Right lobe of liver (tissue), 6 donors: ENCODE measurements at regions of chr18 and their contacts with region 1.

Region 1: DNA sequence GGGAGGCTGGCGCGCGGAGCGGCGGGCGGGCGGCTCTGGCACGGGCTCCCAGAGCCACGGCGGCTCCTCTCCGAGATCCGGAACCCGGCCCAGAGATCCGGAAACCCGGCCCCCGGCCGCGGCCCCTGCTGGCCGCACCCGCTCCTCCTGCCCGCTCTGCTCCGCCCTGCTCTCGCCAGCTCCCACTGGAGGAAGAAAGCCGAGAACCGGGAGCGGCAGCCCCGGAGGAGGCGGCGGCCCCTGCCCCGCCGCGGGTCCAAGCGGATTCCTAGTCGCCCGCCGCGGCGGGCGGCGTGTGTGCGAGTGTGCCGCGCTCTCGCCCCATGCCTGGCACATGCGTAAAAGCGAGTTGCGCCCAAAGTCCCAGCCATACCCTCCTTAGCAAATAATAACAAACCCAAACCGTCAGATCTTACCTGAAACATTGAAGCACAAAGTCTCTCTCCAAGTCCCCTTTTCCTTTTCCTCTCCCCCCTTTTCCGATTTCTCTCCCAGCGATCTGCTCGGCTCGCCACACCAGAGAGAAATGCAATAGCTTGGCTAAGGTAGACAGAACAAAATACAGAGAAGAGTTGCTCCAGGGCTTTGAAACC is 108.7 kb upstream of the KCTD1 start:
- DNase-seq: peak; percentile 86 to 89 (median 88)
- ATAC-seq: peak; percentile 85 to 93 (median 92)
- H3K4me3 ChIP-seq: peak overlapping the region; percentile 66 to 73 (median 69)
- H3K27ac ChIP-seq: peak overlapping the region; percentile 51 to 68 (median 59)
- H3K4me1 ChIP-seq: peaks cover 0 to 6% (median 3%) of the 10 kb centered on the region in 4 donors
- H3K27me3 ChIP-seq: no peaks in the 10 kb centered on the region
- CTCF ChIP-seq: peak; percentile 21 to 36 (median 28)
- POLR2A ChIP-seq: peak; percentile 74

Region 2: DNA sequence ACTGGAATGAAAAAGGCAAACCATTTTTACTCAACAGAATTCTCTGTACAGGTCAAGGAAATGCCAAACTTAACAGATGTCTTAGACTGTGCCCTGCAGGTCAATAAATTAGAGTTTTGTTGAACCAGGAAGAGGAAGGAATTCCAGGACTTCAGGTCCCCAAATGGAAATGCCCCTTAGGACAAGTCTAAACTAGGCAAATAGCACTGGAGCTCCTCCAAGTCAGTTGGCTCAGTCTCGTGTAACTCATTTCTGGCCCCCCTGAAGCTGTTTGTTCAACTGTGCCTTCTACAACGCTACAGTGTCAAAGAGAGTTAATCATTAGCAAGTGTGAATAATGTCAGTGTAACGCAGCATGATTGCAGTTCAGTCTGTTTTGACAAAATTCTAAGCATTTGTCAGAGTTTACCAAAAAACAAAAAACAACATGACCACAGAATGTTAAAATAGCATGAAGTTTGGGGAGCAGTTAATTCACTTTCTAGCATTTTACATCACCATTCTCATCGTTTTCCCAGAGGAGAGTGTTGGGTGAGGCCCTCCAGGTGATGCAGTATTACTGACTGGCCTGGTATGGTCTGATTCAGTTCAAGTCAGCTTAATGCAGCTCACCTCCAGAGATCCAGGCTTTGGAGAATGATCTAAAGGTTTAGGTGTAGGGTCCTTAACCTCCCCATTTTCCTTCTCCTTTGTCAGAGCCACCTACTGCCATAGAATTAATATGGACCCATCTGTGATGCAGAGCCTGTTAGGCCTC is 100.4 kb after region 1 on chr18:
- intact Hi-C with region 1: loop called in 1 of 2 experiments (anchors 10 kb)
- DNase-seq: peak in 2 of 3 donors; percentile 29 to 83
- ATAC-seq: peak; percentile 76 to 84 (median 78)
- H3K4me3 ChIP-seq: no peak overlapping the region
- H3K27ac ChIP-seq: peak overlapping the region in 2 of 3 donors; percentile 24 to 28
- H3K4me1 ChIP-seq: peaks cover 0 to 41% (median 23%) of the 10 kb centered on the region in 4 donors
- H3K27me3 ChIP-seq: no peaks in the 10 kb centered on the region
- CTCF ChIP-seq: no peak
- POLR2A ChIP-seq: no peak

Region 3: DNA sequence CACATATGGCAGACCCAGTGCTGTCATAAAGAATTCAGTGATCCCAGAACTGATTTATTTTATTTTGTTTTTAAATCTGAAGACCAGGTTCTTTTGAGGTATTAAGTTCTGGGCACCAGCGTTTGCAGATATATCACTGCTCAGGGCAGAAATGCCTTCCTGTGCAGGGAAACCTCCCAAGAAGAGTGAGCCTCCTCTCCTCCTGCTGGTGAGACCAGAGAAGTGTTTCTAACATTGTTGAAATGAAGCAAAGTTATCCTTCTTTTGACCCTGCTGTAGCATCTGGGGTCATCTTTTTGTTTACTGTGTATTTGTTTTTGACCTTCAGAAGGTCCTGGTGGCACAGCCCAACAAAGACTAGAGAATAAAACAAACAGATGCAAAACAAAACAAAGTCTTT is 114.5 kb after region 1 on chr18:
- intact Hi-C with region 1: loop called in 1 of 2 experiments (anchors 10 kb)
- DNase-seq: peak in 1 of 3 donors; percentile 58
- ATAC-seq: peak; percentile 94 to 98 (median 96)
- H3K4me3 ChIP-seq: no peak overlapping the region
- H3K27ac ChIP-seq: no peak overlapping the region
- H3K4me1 ChIP-seq: no peaks in the 10 kb centered on the region
- H3K27me3 ChIP-seq: no peaks in the 10 kb centered on the region
- CTCF ChIP-seq: peak; percentile 52 to 77 (median 66)
- POLR2A ChIP-seq: no peak